Cardiac septum (tissue), 1 donor: ENCODE measurements at regions of chr16 and their contacts with region 1.

Region 1: DNA sequence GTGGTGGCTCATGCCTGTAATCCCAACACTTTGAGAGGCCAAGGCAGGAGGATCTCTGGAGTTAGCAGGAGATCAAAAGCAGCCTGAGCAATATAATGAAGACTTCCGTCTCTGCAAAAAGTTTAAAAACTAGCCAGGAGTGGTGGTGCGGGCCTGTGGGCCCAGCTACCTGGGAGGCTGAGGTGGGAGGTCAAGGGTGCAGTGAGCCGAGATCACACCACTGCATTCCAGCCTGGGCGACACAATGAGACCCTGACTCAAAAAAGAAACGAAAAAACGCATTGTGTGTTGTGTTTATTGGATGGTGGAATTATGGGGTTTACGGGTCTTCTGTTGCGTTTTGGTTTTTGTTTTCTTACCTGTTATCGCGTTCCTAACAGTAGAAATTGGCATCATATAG is 863 bp upstream of the DDX19A start:
- DNase-seq: no peak

Region 2: DNA sequence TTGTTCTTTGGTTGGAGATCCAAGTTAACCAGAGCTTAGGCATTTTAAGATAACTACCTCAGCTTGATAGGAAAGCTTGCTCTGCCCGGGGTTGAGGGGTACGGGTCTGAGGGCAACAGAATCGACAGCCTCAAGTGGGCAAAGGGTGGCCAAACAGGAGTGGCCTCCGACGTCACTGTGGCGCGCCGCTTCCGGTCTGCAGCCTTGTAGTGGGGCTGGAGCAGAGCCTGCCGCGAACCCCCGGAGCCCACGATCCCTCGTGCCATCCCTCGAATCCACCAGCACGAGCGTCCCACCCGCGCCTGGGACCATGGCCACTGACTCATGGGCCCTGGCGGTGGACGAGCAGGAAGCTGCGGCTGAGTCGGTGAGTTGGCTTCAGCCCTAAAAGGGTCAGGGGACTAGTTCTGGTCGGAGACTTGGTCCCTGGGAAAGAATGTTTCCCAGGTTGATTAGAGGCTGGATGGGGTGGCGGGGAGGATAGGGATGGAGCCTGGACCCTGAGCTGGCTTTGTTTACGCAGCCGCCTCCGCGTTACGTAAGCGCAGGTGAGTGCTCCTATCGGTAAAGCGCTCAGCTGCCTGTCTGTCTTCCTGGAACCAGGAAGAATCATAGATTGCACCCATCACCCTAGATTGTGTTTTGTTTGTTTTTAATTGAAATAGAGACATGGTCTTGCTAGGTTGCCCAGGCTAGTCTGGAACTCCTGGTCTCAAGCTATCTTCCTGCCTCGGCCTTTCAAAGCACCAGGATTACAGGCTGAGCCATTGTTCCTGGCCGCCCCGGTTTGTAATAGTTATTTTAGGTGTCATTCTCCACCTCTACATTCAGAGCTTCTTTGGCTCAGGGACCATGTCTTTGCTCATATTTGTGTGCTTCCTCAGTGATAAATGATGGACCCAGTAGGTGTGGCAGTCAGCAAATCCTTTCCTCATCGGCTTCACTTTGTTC is 46.6 kb before region 1 on chr16 and contains the start of gene DDX19B:
- intact Hi-C with region 1: loop called (anchors 2 kb)
- DNase-seq: peak; percentile 90
- total RNA-seq, gene DDX19B: 13.7 TPM

Region 3: DNA sequence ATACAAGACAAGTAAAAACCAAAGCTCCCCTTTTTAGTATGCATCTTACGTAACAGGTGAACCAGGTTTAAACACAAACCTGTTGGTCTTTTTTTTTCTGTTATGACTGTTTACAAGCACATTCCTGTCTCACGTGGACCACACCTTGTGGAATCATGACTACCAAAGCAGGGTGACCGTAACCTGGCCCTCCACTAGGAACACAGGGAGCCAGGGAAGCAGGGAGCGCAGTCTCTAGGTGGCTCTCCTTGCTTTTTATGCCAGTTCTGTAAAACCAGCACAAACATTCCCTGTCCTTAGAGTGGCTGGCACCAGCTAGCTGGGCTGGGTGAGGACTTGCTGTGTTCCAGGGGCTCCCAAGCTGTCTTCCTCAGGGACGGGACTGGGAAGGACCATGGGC is 44.9 kb after region 1 on chr16:
- intact Hi-C with region 1: no loop called
- DNase-seq: no peak